ENCODE measurements at regions of chr10 and their contacts with region 1.

Region 1: GRCh38 chr10:73096449-73097304 is at the start of gene P4HA1:
- DNase-seq: peak; percentile 94 to 98 (median 95)
- H3K4me3 ChIP-seq: peak within 1 kb of the TSS; percentile 52 to 95
- H3K4me3 Mint-ChIP-seq: peak within 1 kb of the TSS; percentile 87 to 96 (median 94)
- H3K27ac ChIP-seq: peak within 1 kb of the TSS; percentile 87
- H3K27ac Mint-ChIP-seq: peak within 1 kb of the TSS; percentile 91 to 99 (median 96)
- H3K4me1 ChIP-seq: peaks cover 22% of the 10 kb centered on the region
- H3K4me1 Mint-ChIP-seq: peaks cover 13 to 53% (median 29%) of the 10 kb centered on the region in 4 donors
- H3K27me3 ChIP-seq: no peaks in the 10 kb centered on the region
- H3K27me3 Mint-ChIP-seq: no peaks in the 10 kb centered on the region
- total RNA-seq, gene P4HA1: 17.8 to 18.6 TPM

Region 2: DNA sequence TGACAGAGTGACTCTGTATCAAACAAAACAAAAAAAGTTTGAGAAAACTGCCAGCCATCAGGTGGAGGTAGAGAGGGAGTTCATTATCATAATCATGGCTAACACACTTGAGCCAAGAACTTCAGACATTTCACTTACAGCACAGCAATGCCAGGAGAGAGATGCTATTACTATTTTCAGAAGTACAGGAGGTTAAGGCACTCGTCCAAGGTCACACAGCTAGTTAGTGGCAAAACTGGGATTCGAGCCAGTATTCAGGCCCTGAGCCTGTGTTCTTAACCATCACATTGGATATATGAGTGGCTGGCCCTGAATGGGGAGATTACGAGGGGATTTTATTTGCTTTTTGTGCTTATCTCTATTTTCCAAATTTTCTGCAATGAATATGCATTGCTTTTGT is 1909.1 kb before region 1 on chr10:
- CTCF ChIA-PET with region 1: no interaction called
- POLR2A ChIA-PET with region 1: no interaction called
- intact Hi-C with region 1: no loop called
- DNase-seq: no peak
- H3K4me3 ChIP-seq: no peak overlapping the region
- H3K4me3 Mint-ChIP-seq: no peak overlapping the region
- H3K27ac ChIP-seq: no peak overlapping the region
- H3K27ac Mint-ChIP-seq: no peak overlapping the region
- H3K4me1 ChIP-seq: no peaks in the 10 kb centered on the region
- H3K4me1 Mint-ChIP-seq: no peaks in the 10 kb centered on the region
- H3K27me3 ChIP-seq: no peaks in the 10 kb centered on the region
- H3K27me3 Mint-ChIP-seq: peaks cover 0 to 8% of the 10 kb centered on the region in 2 donors

Region 3: GRCh38 chr10:73076360-73077183 is 20.1 kb before region 1 on chr10:
- CTCF ChIA-PET with region 1: interaction called, 15 read pairs
- POLR2A ChIA-PET with region 1: interaction called, 8 read pairs
- intact Hi-C with region 1: no loop called
- DNase-seq: no peak
- H3K4me3 ChIP-seq: no peak overlapping the region
- H3K4me3 Mint-ChIP-seq: peak overlapping the region in 2 of 8 donors; percentile 14 to 48
- H3K27ac ChIP-seq: no peak overlapping the region
- H3K27ac Mint-ChIP-seq: peak overlapping the region in 5 of 7 donors; percentile 3 to 75 (median 60)
- H3K4me1 ChIP-seq: no peaks in the 10 kb centered on the region
- H3K4me1 Mint-ChIP-seq: peaks cover 6 to 18% (median 9%) of the 10 kb centered on the region in 4 donors
- H3K27me3 ChIP-seq: no peaks in the 10 kb centered on the region
- H3K27me3 Mint-ChIP-seq: no peaks in the 10 kb centered on the region

Region 4: DNA sequence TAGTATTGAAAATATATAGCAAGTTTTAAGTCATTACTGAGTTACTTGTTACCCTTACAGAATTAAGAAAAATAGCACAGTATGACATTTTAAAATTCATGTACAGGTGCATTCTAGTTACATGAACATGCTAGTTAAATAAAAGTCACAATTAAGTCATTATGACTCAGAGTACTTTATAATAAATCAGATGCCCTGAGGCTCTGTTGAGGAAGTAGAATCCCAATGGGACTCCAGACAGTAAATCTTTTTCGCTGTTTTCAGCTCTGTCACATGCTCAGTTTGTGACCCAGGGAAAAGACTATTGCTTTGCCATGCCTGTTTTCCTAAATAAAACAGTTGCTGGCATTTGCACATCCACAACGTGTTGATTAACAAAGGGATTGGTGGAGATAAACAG is 34.6 kb after region 1 on chr10:
- CTCF ChIA-PET with region 1: interaction called, 37 read pairs
- POLR2A ChIA-PET with region 1: interaction called, 10 read pairs
- intact Hi-C with region 1: loop called (anchors 5 kb)
- DNase-seq: no peak
- H3K4me3 ChIP-seq: no peak overlapping the region
- H3K4me3 Mint-ChIP-seq: no peak overlapping the region
- H3K27ac ChIP-seq: no peak overlapping the region
- H3K27ac Mint-ChIP-seq: peak overlapping the region in 2 of 7 donors; percentile 29 to 72
- H3K4me1 ChIP-seq: no peaks in the 10 kb centered on the region
- H3K4me1 Mint-ChIP-seq: no peaks in the 10 kb centered on the region
- H3K27me3 ChIP-seq: no peaks in the 10 kb centered on the region
- H3K27me3 Mint-ChIP-seq: no peaks in the 10 kb centered on the region

Region 5: GRCh38 chr10:73159038-73159648 is 62.5 kb after region 1 on chr10:
- CTCF ChIA-PET with region 1: interaction called, 158 read pairs
- POLR2A ChIA-PET with region 1: interaction called, 15 read pairs
- intact Hi-C with region 1: loop called (anchors 1 kb)
- DNase-seq: peak; percentile 50 to 67 (median 57)
- H3K4me3 ChIP-seq: no peak overlapping the region
- H3K4me3 Mint-ChIP-seq: no peak overlapping the region
- H3K27ac ChIP-seq: no peak overlapping the region
- H3K27ac Mint-ChIP-seq: peak overlapping the region in 5 of 7 donors; percentile 25 to 81 (median 53)
- H3K4me1 ChIP-seq: peaks cover 30% of the 10 kb centered on the region
- H3K4me1 Mint-ChIP-seq: peaks cover 33 to 39% (median 35%) of the 10 kb centered on the region in 4 donors
- H3K27me3 ChIP-seq: no peaks in the 10 kb centered on the region
- H3K27me3 Mint-ChIP-seq: no peaks in the 10 kb centered on the region

Region 6: DNA sequence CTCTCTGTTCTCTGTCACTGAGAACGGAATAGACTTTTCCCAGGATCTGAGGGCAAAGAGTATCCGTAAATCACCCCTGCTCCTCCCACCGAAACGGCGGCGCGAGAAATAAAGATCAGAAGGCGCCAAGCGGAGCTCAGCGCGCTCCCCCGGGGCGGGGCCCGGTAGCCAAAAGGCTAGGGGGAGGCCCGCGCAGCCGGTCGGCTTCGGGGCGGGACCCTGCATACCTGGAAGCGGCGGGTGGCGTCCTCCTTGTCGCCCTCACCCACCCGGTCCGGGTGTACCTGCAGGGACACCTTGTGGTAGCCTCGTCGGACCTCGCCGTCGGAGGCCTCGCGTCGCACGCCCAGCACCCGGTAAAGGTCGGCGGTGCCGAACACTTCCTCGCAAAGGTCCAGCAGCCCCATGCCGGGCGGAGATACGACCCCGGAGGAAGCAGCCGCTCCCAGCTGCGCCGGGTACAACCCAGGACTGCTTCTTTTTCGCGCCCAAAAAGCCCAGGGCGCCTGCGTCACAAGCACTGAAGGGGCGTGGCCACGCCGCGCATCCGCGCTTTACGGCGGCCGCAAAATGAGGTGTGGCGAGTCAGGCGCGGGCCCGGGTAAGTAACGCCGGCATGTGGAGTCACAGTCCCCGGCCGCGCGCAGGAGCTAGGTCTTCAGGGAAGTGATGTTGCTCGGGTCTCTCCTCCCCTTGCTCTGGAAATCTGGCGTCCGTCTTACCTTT is 150.3 kb after region 1 on chr10 and contains the start of gene DNAJC9:
- CTCF ChIA-PET with region 1: interaction called, 4 read pairs
- POLR2A ChIA-PET with region 1: interaction called, 5 read pairs
- intact Hi-C with region 1: loop called (anchors 1 kb)
- DNase-seq: peak; percentile 95 to 98 (median 96)
- H3K4me3 ChIP-seq: peak within 1 kb of the TSS; percentile 53 to 87
- H3K4me3 Mint-ChIP-seq: peak within 1 kb of the TSS; percentile 96 to 99 (median 97)
- H3K27ac ChIP-seq: peak within 1 kb of the TSS; percentile 82
- H3K27ac Mint-ChIP-seq: peak within 1 kb of the TSS; percentile 94 to 99 (median 98)
- H3K4me1 ChIP-seq: peaks cover 50% of the 10 kb centered on the region
- H3K4me1 Mint-ChIP-seq: peaks cover 35 to 74% (median 56%) of the 10 kb centered on the region in 4 donors
- H3K27me3 ChIP-seq: no peaks in the 10 kb centered on the region
- H3K27me3 Mint-ChIP-seq: no peaks in the 10 kb centered on the region
- total RNA-seq, gene DNAJC9: 31.6 to 31.7 TPM

Region 7: DNA sequence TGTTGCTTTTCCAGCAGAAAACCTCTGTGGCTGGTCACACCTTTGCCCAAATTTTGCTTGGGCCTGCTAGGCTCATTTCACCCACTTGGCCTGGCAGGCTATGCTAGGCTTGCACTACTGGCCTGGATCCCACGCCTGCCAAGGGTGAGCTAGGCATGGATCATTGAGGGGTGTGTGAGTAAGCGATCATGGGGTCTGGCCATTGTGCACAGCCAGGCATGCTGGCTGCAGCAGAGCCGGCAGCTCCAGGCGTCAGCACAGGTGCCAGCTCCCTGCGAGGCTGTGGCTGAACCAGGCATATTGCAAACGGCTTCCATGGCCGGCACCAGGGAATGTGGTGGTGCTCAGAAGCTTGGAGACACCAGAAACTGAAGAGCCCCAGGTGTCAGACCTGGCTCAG is 242.8 kb after region 1 on chr10:
- CTCF ChIA-PET with region 1: no interaction called
- POLR2A ChIA-PET with region 1: no interaction called
- intact Hi-C with region 1: no loop called
- DNase-seq: no peak
- H3K4me3 ChIP-seq: no peak overlapping the region
- H3K4me3 Mint-ChIP-seq: no peak overlapping the region
- H3K27ac ChIP-seq: no peak overlapping the region
- H3K27ac Mint-ChIP-seq: no peak overlapping the region
- H3K4me1 ChIP-seq: no peaks in the 10 kb centered on the region
- H3K4me1 Mint-ChIP-seq: no peaks in the 10 kb centered on the region
- H3K27me3 ChIP-seq: no peaks in the 10 kb centered on the region
- H3K27me3 Mint-ChIP-seq: no peaks in the 10 kb centered on the region

Region 8: DNA sequence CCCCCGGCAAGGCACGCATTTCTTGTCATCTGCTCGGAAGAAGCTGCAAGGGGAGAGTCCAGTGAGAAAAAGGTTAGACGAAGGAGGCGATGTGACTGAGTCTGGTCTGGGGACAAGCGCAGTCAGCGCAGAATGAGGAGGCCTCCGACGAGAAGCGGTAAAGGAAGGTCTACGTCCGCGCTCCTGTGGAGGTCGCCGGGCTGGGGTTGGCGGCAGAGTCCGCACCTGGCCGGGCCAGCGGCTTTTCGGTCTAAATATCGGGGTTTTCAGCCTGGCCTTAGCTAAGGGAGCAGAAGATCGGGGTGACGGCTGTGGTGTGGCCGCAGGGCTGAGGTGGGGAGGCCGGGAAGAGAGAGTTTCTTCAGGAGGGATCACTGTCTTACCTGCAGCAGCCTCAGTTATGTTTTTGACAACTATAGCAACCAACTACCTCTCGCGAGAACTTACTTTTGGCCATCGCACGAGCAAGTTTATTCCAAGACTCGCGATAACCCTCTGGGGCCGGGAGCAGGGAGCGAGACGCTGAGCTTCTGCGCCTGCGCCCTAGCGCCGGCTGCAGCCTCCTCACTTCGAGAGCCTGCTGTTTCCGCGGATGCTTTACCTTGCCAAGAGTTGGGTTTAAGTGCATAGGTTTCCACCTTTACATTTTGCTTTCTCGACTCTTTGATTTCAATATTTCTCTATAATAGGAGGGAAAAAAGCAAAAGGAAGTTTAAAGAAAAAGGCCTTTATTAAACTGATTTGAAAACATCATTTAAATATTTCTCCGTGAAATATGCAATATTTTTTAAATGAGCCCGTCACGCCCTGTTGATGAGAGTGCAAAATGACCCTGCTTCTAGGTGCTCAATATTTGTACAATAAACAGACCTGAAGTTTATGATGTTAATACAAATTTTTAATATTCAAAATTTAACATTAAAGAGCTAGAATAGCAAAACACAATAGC is 261.9 kb after region 1 on chr10 and contains the start of gene CFAP70:
- CTCF ChIA-PET with region 1: interaction called, 4 read pairs
- POLR2A ChIA-PET with region 1: interaction called, 6 read pairs
- intact Hi-C with region 1: loop called (anchors 1 kb)
- DNase-seq: peak; percentile 92 to 96 (median 96)
- H3K4me3 ChIP-seq: peak within 1 kb of the TSS; percentile 38 to 60
- H3K4me3 Mint-ChIP-seq: peak within 1 kb of the TSS; percentile 94 to 98 (median 97)
- H3K27ac ChIP-seq: peak within 1 kb of the TSS; percentile 80
- H3K27ac Mint-ChIP-seq: peak within 1 kb of the TSS; percentile 91 to 99 (median 99)
- H3K4me1 ChIP-seq: peaks cover 12% of the 10 kb centered on the region
- H3K4me1 Mint-ChIP-seq: peaks cover 9 to 21% (median 17%) of the 10 kb centered on the region in 4 donors
- H3K27me3 ChIP-seq: no peaks in the 10 kb centered on the region
- H3K27me3 Mint-ChIP-seq: peaks cover 0 to 4% of the 10 kb centered on the region in 2 donors
- total RNA-seq, gene CFAP70: 3.8 to 5.6 TPM

Region 9: DNA sequence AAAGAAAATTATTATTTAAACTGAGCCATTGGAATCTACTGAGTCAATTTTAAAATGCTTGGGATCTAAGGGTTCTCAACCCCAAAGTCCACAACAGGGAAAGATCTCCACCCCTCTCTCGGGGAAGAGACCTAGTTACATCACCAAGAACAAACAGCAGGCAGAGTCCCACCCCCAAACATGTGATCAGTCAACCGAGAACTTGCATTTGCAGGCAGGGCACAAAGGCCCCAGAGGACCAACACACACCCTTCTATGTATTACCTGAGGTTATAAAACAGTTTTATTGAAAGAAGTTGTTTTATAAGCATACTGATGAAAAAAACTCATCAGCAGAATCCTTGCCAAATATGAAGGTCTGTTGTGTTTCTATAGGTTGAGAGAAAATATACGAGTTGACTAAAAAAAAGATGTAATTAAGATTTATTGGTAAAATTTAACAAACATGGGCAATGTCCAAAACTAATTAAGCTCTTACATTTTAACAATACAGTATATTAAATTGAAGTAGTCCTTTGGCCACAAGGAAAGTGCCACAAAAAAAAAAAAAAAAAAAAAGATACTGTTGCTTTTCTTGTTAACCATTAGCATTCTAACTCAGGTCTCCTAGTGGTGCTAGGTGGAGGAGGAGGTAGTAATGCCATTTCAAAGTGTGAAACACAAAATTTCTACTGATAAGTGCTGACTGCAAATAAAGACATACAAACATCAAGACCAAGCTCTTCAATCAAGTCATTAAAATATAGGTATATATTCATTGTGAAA is 495.4 kb after region 1 on chr10:
- CTCF ChIA-PET with region 1: no interaction called
- POLR2A ChIA-PET with region 1: no interaction called
- intact Hi-C with region 1: no loop called
- DNase-seq: peak in 2 of 5 donors; percentile 10 to 12
- H3K4me3 ChIP-seq: peak overlapping the region in 1 of 2 donors; percentile 8
- H3K4me3 Mint-ChIP-seq: peak overlapping the region in 7 of 8 donors; percentile 68 to 79 (median 76)
- H3K27ac ChIP-seq: no peak overlapping the region
- H3K27ac Mint-ChIP-seq: peak overlapping the region; percentile 24 to 86 (median 74)
- H3K4me1 ChIP-seq: peaks cover 21% of the 10 kb centered on the region
- H3K4me1 Mint-ChIP-seq: peaks cover 11 to 28% (median 16%) of the 10 kb centered on the region in 4 donors
- H3K27me3 ChIP-seq: no peaks in the 10 kb centered on the region
- H3K27me3 Mint-ChIP-seq: no peaks in the 10 kb centered on the region

Region 10: GRCh38 chr10:73625884-73626752 is 529.4 kb after region 1 on chr10:
- CTCF ChIA-PET with region 1: no interaction called
- POLR2A ChIA-PET with region 1: no interaction called
- intact Hi-C with region 1: loop called (anchors 10 kb)
- DNase-seq: peak; percentile 92 to 97 (median 94)
- H3K4me3 ChIP-seq: peak overlapping the region; percentile 74 to 95
- H3K4me3 Mint-ChIP-seq: peak overlapping the region; percentile 90 to 99 (median 96)
- H3K27ac ChIP-seq: peak overlapping the region; percentile 76
- H3K27ac Mint-ChIP-seq: peak overlapping the region; percentile 82 to 100 (median 98)
- H3K4me1 ChIP-seq: peaks cover 16% of the 10 kb centered on the region
- H3K4me1 Mint-ChIP-seq: peaks cover 5 to 26% (median 16%) of the 10 kb centered on the region in 4 donors
- H3K27me3 ChIP-seq: no peaks in the 10 kb centered on the region
- H3K27me3 Mint-ChIP-seq: no peaks in the 10 kb centered on the region

Measured in CD4-positive, alpha-beta memory T cell (primary cell).